Colonic mucosa (tissue), 4 donors: ENCODE measurements at regions of chr2 and their contacts with region 1.

Region 1: GRCh38 chr2:181058378-181059269 is 78.2 kb downstream of the UBE2E3 start:
- DNase-seq: peak; percentile 40
- H3K4me3 ChIP-seq: no peak overlapping the region
- H3K27ac ChIP-seq: no peak overlapping the region
- H3K4me1 ChIP-seq: no peaks in the 10 kb centered on the region
- H3K27me3 ChIP-seq: no peaks in the 10 kb centered on the region
- CTCF ChIP-seq: peak; percentile 81

Region 2: DNA sequence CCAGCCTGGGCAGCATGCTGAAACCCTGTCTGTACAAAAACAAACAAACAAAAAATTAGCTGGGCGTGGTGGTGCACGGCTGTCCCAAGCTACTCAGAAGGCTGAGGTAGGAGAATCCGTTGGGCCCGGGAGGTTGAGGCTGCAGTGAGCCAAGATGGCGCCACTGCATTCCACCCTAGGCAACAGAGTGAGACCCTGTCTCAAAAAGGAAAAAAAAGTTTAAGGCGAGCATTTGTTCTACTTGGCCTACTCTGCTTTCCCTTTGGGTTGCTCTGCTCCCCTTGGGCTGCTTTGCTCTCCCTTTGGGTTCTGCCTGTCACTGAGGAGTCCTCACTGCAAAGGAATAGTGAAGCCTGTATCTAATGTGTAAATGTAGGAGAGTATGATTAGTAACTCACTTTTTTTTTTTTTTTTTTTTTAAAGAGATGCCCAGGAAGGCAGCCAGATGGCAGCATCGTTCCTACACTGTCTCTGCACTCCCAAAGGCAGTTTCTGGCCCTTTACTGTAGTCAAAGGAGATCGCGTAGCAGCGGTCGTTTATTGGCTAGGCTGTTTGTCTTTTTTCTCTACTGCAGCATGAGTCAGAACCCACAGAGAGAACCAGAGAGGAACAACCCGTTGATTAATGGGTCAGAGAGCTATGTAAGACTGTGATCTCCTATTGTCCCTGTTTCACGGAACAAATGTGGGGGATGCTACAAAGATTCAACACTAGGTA is 933.2 kb before region 1 on chr2:
- intact Hi-C with region 1: loop called (anchors 5 kb)
- DNase-seq: peak; percentile 31
- H3K4me3 ChIP-seq: no peak overlapping the region
- H3K27ac ChIP-seq: no peak overlapping the region
- H3K4me1 ChIP-seq: no peaks in the 10 kb centered on the region
- H3K27me3 ChIP-seq: no peaks in the 10 kb centered on the region
- CTCF ChIP-seq: peak; percentile 50

Region 3: GRCh38 chr2:180240774-180241173 is 817.9 kb before region 1 on chr2:
- intact Hi-C with region 1: loop called (anchors 10 kb)
- DNase-seq: no peak
- H3K4me3 ChIP-seq: no peak overlapping the region
- H3K27ac ChIP-seq: no peak overlapping the region
- H3K4me1 ChIP-seq: no peaks in the 10 kb centered on the region
- H3K27me3 ChIP-seq: no peaks in the 10 kb centered on the region
- CTCF ChIP-seq: no peak

Region 4: GRCh38 chr2:180604077-180604476 is 454.5 kb before region 1 on chr2:
- intact Hi-C with region 1: loop called (anchors 10 kb)
- DNase-seq: peak; percentile 18
- H3K4me3 ChIP-seq: no peak overlapping the region
- H3K27ac ChIP-seq: no peak overlapping the region
- H3K4me1 ChIP-seq: no peaks in the 10 kb centered on the region
- H3K27me3 ChIP-seq: no peaks in the 10 kb centered on the region
- CTCF ChIP-seq: no peak